ENCODE measurements at regions of chr9 and their contacts with region 1.

Region 1: DNA sequence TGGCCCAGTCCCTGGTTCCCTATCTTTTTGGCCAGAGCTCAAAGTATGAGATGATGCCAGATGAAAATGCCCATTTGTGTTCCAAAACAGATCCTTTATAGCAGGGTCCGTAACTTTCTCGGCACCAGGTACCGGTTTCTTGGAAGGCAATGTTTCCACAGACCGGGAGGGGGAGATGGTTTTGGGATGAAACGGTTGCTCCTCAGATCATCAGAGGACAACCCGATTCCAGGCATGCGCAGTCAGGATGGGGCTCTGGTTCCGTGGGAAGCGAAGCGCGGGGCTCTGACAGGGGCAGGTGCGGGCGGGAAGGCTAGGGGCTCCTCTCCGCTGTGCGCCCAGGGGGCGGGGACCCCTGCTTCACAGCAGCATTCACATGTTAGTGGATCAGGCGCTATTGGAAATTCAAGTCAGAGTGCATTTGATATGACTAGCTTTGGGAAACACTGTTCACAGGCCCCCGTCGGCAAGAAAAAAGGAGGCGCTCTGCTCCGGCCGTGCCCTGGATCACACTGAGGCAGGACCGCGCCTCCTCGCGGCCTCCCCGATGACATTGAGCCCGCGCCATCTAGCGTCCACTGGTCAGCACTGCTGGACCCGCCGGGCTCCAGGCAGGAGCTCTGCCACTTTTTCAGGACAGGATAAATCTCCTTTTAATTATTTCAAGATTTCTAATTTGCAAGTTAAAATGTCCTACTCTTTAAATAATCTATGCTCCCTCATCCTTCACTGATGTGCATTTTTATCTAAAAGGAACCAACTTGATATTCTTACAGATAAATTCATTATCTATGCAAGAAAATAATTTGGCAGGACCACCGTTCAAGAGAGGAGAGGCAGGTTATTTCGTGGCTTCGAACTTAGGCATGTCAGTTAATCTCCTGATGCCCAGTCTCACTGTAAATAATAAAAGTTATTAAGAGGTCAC is 190.0 kb downstream of the FANCC start:
- DNase-seq: peak; percentile 96

Region 2: DNA sequence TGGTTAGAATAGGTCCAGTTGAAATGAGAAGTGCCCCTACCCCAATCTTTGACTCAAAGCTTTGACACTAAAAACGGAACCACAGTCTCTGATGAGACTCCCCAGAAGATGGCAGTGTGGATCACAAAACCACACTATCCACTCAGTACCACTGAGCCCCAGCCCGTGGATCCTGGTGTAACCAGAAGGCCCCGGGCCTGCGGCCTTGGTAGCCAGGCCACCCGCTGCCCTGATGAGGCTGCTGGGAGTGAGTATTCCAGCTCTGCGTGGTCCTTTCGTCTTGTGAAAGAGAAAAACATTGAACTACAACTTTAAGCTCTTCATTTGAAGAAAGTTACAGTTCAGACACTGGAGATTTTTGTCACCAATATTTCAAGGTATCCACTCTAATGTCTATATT is 446.0 kb before region 1 on chr9:
- intact Hi-C with region 1: loop called (anchors 5 to 10 kb)
- DNase-seq: peak; percentile 91

Region 3: GRCh38 chr9:94783102-94783664 is 344.3 kb before region 1 on chr9:
- intact Hi-C with region 1: loop called in 1 of 2 experiments (anchors 5 kb)
- DNase-seq: no peak

Measured in posterior vena cava (tissue), 2 donors.